Panc1 (cell line): ENCODE measurements at regions of chr5 and their contacts with region 1.

Region 1: DNA sequence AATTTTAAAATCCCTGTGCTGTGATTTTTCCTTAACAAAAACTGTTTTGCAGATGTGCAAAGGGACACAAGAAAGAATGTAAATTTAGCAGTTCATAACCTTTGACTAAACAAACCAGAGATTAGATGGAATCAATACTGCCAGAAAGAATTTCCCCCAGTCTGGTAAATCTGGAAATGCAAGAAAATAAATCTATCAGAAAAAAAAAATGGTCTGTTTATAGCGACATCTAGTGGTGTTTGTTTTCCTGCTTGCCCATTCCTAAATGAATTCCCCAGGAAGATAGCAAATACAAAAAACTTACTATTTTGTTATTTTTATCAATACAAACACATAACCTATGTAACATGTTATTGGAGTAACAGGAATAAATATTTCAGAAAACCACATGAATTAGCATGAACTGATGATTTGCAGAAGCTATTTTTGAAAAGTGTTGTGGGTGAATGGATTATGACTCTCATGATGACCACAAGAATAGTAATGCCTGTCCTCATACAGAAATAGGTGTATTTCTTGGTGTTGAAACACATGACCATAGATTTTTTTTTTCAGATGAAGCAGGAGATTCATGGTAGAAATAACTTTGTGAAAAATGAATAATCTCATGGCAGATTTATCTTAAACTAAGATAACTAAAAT is 1703.8 kb downstream of the MAT2B start:
- DNase-seq: peak; percentile 12
- ATAC-seq: no peak
- H3K4me3 ChIP-seq: no peak overlapping the region
- H3K27ac ChIP-seq: no peak overlapping the region
- H3K4me1 ChIP-seq: no peaks in the 10 kb centered on the region
- H3K27me3 ChIP-seq: no peaks in the 10 kb centered on the region
- CTCF ChIP-seq: peak; percentile 77; the same call in 1 of the 2 replicates

Region 2: GRCh38 chr5:164672931-164673694 is 536.1 kb before region 1 on chr5:
- CTCF ChIA-PET with region 1: no interaction called
- POLR2A ChIA-PET with region 1: no interaction called
- in situ Hi-C with region 1: no loop called
- intact Hi-C with region 1: loop called (anchors 10 kb)
- DNase-seq: no peak
- ATAC-seq: no peak
- H3K4me3 ChIP-seq: no peak overlapping the region
- H3K27ac ChIP-seq: no peak overlapping the region
- H3K4me1 ChIP-seq: no peaks in the 10 kb centered on the region
- H3K27me3 ChIP-seq: no peaks in the 10 kb centered on the region
- CTCF ChIP-seq: peak; percentile 29; the same call in 1 of the 2 replicates

Region 3: DNA sequence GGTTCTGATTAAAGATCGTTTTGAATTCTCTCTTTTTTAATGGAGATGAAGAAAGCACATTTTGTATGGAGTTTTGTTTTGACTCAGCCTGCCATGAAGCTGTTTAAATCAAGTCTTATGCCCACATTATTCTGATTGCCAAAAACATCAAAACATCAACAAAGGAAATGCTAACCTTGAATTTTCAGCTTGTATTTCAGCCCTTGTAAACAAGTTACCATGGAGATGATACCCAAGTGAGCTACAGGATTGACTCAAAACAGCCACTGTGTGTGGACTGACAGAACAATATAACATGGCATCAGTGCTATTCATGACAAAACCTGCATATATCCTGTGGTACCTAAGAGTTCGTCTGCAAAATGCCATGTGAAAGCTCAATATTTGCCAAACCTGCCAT is 122.7 kb before region 1 on chr5:
- CTCF ChIA-PET with region 1: no interaction called
- POLR2A ChIA-PET with region 1: no interaction called
- in situ Hi-C with region 1: no loop called
- intact Hi-C with region 1: no loop called
- DNase-seq: no peak
- ATAC-seq: no peak
- H3K4me3 ChIP-seq: no peak overlapping the region
- H3K27ac ChIP-seq: no peak overlapping the region
- H3K4me1 ChIP-seq: no peaks in the 10 kb centered on the region
- H3K27me3 ChIP-seq: no peaks in the 10 kb centered on the region
- CTCF ChIP-seq: no peak

Region 4: GRCh38 chr5:165108809-165109208 is 100.4 kb before region 1 on chr5:
- CTCF ChIA-PET with region 1: no interaction called
- POLR2A ChIA-PET with region 1: no interaction called
- in situ Hi-C with region 1: no loop called
- intact Hi-C with region 1: no loop called
- DNase-seq: no peak
- ATAC-seq: no peak
- H3K4me3 ChIP-seq: no peak overlapping the region
- H3K27ac ChIP-seq: no peak overlapping the region
- H3K4me1 ChIP-seq: no peaks in the 10 kb centered on the region
- H3K27me3 ChIP-seq: no peaks in the 10 kb centered on the region
- CTCF ChIP-seq: no peak